Aorta (tissue), 5 donors: ENCODE measurements at regions of chr7 and their contacts with region 1.

Region 1: GRCh38 chr7:108569381-108570145 is at the starts of genes DNAJB9 and THAP5:
- DNase-seq: peak; percentile 100
- ATAC-seq: peak; percentile 100
- H3K4me3 ChIP-seq: peak within 1 kb of the TSS; percentile 61 to 67
- H3K27ac ChIP-seq: peak within 1 kb of the TSS; percentile 93 to 97
- H3K4me1 ChIP-seq: no peaks in the 10 kb centered on the region
- H3K27me3 ChIP-seq: no peaks in the 10 kb centered on the region
- total RNA-seq, gene DNAJB9: 24.3 to 28.4 TPM
- total RNA-seq, gene THAP5: 23.6 to 27.4 TPM

Region 2: GRCh38 chr7:108211382-108212201 is 358.0 kb before region 1 on chr7:
- intact Hi-C with region 1: no loop called
- DNase-seq: no peak
- ATAC-seq: no peak
- H3K4me3 ChIP-seq: no peak overlapping the region
- H3K27ac ChIP-seq: no peak overlapping the region
- H3K4me1 ChIP-seq: no peaks in the 10 kb centered on the region
- H3K27me3 ChIP-seq: no peaks in the 10 kb centered on the region

Region 3: DNA sequence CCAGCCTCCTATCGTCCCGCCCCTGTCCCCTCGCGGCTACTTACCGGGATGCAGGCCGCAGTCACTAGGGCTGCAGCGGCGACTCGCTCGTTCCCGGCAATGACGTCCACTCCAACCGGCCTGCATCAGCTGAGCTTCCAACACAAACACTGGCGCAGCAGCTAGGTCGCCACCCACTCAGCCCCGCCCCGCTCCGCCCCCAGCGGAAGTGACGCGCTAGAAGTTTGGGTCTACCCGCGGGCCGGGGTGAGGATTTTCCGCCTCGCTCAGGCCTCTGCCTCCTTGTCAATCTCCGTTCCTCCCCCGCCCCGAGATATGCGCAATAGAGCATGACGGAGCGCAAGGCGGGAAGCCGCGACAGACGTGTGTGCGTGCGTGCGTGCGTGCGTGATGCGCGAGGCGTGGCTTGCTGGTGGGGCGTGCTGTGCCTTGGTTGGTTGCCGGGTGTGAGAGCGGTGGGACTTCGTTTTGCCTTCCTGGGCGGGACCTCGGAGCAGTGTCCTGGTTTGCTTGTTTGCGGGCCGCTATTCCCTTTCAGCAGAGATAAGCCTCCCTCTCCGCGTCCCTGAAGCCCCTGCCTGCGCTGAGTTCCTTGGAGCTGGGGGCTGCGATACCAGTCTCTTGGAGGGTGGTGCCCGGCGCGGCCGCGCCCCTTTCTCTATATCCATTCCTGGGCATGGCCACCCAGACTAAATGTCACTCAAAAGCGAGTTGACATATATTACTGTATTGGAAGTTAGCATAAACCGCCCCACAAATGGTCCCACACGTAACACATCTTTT is 43.4 kb before region 1 on chr7 and contains the start of gene PNPLA8:
- intact Hi-C with region 1: loop called (anchors 1 kb)
- DNase-seq: peak; percentile 100
- ATAC-seq: peak; percentile 99
- H3K4me3 ChIP-seq: peak within 1 kb of the TSS; percentile 53 to 82
- H3K27ac ChIP-seq: peak within 1 kb of the TSS; percentile 38 to 87
- H3K4me1 ChIP-seq: peaks cover 0 to 6% of the 10 kb centered on the region in 2 donors
- H3K27me3 ChIP-seq: no peaks in the 10 kb centered on the region
- total RNA-seq, gene PNPLA8: 31.2 to 32.8 TPM